Caco-2 (cell line): ENCODE measurements at regions of chr1 and their contacts with region 1.

Region 1: GRCh38 chr1:230899841-230900251 is 31.5 kb upstream of the C1orf198 start:
- DNase-seq: peak; percentile 57 to 58
- H3K4me3 ChIP-seq: no peak overlapping the region
- H3K4me3 Mint-ChIP-seq: peak overlapping the region; percentile 0
- H3K27ac Mint-ChIP-seq: peak overlapping the region; percentile 42
- H3K4me1 ChIP-seq: peaks cover 33% of the 10 kb centered on the region
- H3K4me1 Mint-ChIP-seq: peaks cover 32% of the 10 kb centered on the region
- H3K27me3 ChIP-seq: no peaks in the 10 kb centered on the region
- H3K27me3 Mint-ChIP-seq: no peaks in the 10 kb centered on the region
- CTCF ChIP-seq: no peak

Region 2: DNA sequence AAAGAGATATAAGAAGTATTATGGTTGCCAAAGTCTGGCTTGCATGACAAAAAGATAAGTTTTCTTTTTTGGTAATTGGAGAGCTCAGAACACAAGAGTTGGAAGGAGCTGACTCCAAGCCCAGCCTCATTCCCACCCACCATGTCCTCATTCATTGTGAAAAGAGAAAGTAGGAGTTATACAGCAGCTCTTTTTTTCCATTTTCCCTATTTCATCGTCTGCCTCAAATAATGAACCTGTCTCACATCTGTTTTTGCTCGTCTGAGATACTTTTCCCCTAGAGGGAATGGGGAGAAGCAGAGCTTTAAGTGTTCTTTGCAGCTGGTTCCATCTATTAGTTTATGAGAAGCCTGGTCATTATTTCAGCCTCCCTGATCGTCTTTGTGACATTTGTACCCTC is 220.7 kb before region 1 on chr1:
- CTCF ChIA-PET with region 1: no interaction called
- POLR2A ChIA-PET with region 1: no interaction called
- intact Hi-C with region 1: no loop called
- DNase-seq: no peak
- H3K4me3 ChIP-seq: no peak overlapping the region
- H3K4me3 Mint-ChIP-seq: no peak overlapping the region
- H3K27ac Mint-ChIP-seq: no peak overlapping the region
- H3K4me1 ChIP-seq: no peaks in the 10 kb centered on the region
- H3K4me1 Mint-ChIP-seq: peaks cover 12% of the 10 kb centered on the region
- H3K27me3 ChIP-seq: no peaks in the 10 kb centered on the region
- H3K27me3 Mint-ChIP-seq: no peaks in the 10 kb centered on the region
- CTCF ChIP-seq: no peak

Region 3: GRCh38 chr1:230735455-230735854 is 164.4 kb before region 1 on chr1:
- CTCF ChIA-PET with region 1: no interaction called
- POLR2A ChIA-PET with region 1: no interaction called
- intact Hi-C with region 1: no loop called
- DNase-seq: peak; percentile 57 to 64
- H3K4me3 ChIP-seq: no peak overlapping the region
- H3K4me3 Mint-ChIP-seq: no peak overlapping the region
- H3K27ac Mint-ChIP-seq: no peak overlapping the region
- H3K4me1 ChIP-seq: no peaks in the 10 kb centered on the region
- H3K4me1 Mint-ChIP-seq: peaks cover 7% of the 10 kb centered on the region
- H3K27me3 ChIP-seq: no peaks in the 10 kb centered on the region
- H3K27me3 Mint-ChIP-seq: no peaks in the 10 kb centered on the region
- CTCF ChIP-seq: no peak

Region 4: DNA sequence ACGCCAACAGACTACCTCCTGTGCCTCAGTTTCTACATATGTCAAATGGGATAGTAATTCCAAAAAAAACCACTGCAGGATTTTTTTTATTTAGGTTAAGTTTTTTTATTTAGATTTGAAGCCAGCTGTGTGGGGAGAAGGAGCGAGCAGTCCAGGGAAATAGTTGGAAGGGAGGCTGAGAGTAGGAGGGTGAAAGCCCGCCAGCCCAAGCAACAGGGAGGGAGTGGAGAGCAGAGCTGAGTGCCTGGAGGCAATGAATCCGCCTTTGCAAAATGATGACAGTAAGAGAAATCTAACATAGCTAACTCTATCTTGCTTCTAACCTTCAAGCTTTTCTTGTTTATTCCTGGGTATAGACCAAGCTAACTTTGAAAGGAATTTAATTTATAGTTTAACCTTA is 15.9 kb before region 1 on chr1:
- CTCF ChIA-PET with region 1: no interaction called
- POLR2A ChIA-PET with region 1: interaction called, 10 read pairs
- intact Hi-C with region 1: no loop called
- DNase-seq: no peak
- H3K4me3 ChIP-seq: no peak overlapping the region
- H3K4me3 Mint-ChIP-seq: no peak overlapping the region
- H3K27ac Mint-ChIP-seq: no peak overlapping the region
- H3K4me1 ChIP-seq: no peaks in the 10 kb centered on the region
- H3K4me1 Mint-ChIP-seq: peaks cover 10% of the 10 kb centered on the region
- H3K27me3 ChIP-seq: no peaks in the 10 kb centered on the region
- H3K27me3 Mint-ChIP-seq: no peaks in the 10 kb centered on the region
- CTCF ChIP-seq: no peak

Region 5: GRCh38 chr1:231139659-231140654 is 240.1 kb after region 1 on chr1:
- CTCF ChIA-PET with region 1: no interaction called
- POLR2A ChIA-PET with region 1: no interaction called
- intact Hi-C with region 1: no loop called
- DNase-seq: peak; percentile 49 to 56
- H3K4me3 ChIP-seq: no peak overlapping the region
- H3K4me3 Mint-ChIP-seq: no peak overlapping the region
- H3K27ac Mint-ChIP-seq: no peak overlapping the region
- H3K4me1 ChIP-seq: 0 out of 2 replicates have a peak, but pooled peaks cover 3% of the 10 kb centered on the region
- H3K4me1 Mint-ChIP-seq: peaks cover 8% of the 10 kb centered on the region
- H3K27me3 ChIP-seq: no peaks in the 10 kb centered on the region
- H3K27me3 Mint-ChIP-seq: no peaks in the 10 kb centered on the region
- CTCF ChIP-seq: no peak